A673 (cell line): ENCODE measurements at regions of chr5 and their contacts with region 1.

Region 1: DNA sequence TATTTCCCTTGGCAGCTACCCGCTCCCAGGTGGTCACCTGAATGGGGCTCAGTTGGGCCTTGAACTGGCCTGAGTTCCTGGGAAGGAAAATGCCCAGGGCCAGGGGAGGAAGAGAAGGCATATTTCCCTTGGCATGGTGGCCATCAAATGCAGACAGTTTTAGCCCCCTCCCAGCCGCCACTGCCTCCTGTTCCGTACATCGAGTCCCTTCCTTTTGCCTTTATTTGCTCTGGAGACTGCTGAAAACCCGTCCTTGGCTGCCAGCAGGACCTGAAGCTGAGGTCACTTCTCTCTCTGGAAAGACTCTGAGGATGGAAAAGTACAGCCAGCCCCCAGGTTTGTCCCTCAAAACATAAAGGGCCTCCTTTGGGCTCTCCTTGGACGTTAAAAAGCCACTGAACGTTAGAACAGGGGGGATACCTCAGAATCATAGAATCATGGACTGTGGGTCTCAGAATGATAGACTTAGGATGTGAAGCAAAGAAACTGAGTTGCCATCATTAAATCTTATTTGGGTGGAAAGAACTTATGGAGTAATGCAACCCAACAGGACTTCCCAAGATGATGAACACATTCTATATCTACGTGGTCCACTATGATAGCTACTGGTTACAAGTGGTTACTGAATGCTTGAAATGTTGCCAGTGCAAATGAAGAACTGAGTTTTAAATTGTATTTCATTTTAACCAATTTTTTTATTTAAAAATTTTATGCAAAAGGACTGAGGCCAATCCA is 7.1 kb downstream of the SPARC start:
- DNase-seq: no peak
- H3K4me3 ChIP-seq: no peak overlapping the region
- H3K27ac ChIP-seq: no peak overlapping the region
- H3K4me1 ChIP-seq: peaks cover 57% of the 10 kb centered on the region
- H3K27me3 ChIP-seq: no peaks in the 10 kb centered on the region
- CTCF ChIP-seq: no peak

Region 2: DNA sequence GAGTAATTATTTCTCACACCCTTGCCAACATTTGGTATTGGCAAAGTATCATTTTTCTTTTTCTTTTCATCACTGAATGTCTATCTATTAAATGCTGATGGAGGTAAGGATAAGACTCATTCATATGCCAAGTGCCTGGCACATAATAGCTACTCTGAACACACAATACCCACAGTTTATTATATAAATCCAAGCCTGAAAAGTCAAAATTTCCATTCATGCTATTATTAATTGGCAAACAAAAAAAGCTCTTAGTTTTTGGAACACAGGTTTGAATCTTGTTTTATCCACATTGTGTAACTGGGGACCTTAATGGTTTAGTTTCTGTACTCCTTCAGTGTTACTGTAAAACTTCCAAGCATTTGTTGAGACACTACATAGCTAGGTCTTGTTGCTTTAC is 85.2 kb after region 1 on chr5:
- CTCF ChIA-PET with region 1: no interaction called
- POLR2A ChIA-PET with region 1: interaction called, 14 read pairs
- intact Hi-C with region 1: no loop called
- DNase-seq: no peak
- H3K4me3 ChIP-seq: no peak overlapping the region
- H3K27ac ChIP-seq: no peak overlapping the region
- H3K4me1 ChIP-seq: no peaks in the 10 kb centered on the region
- H3K27me3 ChIP-seq: no peaks in the 10 kb centered on the region
- CTCF ChIP-seq: no peak